Activated naive CD4-positive, alpha-beta T cell treated with anti-CD3 and anti-CD28 coated beads for 36 hours (primary cell): ENCODE measurements at regions of chr10 and their contacts with region 1.

Region 1: DNA sequence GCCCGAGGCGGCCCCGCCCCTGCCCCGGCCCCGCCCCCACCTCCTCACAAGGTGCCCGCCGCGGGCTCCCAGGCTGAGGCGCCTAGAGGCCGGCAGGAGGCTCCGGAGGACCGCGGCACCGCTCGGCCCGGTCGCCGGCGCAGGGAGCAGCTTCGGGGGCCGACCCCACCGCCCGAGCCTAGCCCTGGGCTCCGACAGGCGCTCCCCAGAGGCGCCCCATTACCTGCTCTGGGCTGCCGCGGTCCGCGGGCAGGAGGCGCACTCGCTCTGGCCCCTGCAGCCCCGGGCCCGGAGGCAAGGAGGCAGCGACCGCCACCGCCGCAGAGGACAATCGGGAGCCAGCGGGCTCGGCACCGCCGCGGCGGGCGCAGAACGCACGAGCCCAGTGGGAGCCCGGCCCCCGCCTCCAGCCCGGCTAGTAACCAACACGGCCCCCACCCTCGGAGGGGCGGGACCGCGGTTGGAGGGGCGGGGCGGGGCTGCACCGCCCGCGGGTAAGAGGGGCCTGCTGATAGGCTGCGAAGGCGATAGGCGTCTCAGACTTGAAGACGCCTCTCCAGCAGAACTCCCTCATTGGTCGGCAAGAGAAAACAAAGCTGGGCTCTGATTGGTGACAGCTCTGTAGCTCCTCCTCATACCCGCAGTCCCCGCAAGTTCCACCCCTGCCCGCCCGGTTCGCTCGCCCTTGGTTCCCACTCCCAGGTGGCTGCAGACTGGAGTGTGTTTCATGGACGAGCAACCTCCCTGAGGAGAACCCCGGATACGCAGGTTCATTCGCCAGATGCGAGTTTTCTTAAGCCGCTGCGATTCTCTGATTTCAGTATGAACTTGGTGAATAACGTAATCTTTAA is at the start of gene MPP7:
- DNase-seq: peak; percentile 95
- H3K4me3 Mint-ChIP-seq: peak within 1 kb of the TSS; percentile 82
- H3K27ac Mint-ChIP-seq: peak within 1 kb of the TSS; percentile 77
- H3K4me1 Mint-ChIP-seq: peaks cover 53% of the 10 kb centered on the region
- H3K27me3 Mint-ChIP-seq: no peaks in the 10 kb centered on the region
- total RNA-seq, gene MPP7: 23.6 to 25.4 TPM

Region 2: GRCh38 chr10:27742195-27743011 is 560.5 kb before region 1 on chr10:
- CTCF ChIA-PET with region 1: interaction called, 3 read pairs
- intact Hi-C with region 1: loop called (anchors 1 kb)
- DNase-seq: peak; percentile 88
- H3K4me3 Mint-ChIP-seq: peak overlapping the region; percentile 68
- H3K27ac Mint-ChIP-seq: no peak overlapping the region
- H3K4me1 Mint-ChIP-seq: peaks cover 31% of the 10 kb centered on the region
- H3K27me3 Mint-ChIP-seq: peaks cover 49% of the 10 kb centered on the region

Region 3: DNA sequence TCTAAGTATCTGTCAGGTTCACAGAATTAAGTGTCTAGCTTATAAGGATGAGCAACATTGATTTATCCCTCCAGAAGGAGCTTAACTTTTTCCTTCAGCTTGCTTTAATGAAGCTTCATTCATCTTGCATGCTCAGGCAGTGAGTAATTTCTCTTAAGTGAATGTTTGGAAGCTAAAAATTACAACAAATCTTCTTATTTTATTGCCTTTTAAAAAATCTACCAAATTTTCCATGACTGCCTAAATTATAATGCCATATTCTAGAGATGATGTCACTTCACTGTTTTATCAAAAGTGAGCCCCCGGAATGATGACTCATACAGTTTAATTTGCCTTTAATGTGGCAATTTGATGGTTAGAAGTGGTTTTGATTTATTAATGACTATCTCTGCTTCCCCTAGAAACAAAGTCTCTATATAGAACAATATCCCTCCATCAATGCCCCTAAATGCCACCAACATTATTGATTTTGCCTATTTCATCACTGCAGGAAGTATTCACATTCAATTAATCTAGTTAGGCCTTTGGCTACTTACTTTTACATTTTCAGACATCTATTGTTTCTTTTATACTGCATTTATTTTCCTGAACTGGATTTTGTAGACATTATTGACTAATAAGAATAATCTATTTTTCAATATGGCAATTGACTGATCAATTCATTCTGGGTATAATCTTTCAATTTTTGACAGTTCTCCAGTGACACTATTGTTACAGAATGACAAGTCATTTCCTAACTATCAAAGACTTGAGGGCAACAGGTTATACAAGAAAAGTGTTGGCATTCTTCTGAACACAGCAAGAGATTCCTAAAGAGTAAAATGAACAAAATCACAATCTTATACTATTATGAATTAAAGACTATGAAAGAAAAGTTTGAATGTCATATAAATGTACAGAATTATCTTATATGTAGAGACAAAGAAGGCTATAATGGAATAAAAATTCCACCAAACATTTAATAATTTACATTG is 164.7 kb before region 1 on chr10:
- CTCF ChIA-PET with region 1: no interaction called
- intact Hi-C with region 1: no loop called
- DNase-seq: no peak
- H3K4me3 Mint-ChIP-seq: no peak overlapping the region
- H3K27ac Mint-ChIP-seq: no peak overlapping the region
- H3K4me1 Mint-ChIP-seq: peaks cover 3% of the 10 kb centered on the region
- H3K27me3 Mint-ChIP-seq: no peaks in the 10 kb centered on the region

Region 4: DNA sequence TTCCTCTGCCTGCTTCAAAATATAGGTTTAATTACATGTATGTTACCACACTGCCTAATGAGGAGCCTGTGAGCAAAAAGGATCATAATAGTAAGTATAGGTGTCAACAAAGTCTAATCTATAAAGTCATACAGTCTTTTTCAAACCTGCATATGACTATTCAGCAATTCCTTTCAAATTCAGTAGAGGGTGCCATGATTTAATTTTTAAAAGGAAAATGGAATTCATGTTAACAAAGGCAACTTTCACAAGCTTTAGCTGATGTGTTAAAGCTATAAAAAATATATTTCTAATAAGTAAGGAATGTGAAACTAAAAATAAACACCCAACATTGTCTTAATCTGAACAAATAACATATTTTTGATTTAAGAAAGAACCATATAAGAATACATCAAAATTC is 52.1 kb before region 1 on chr10:
- CTCF ChIA-PET with region 1: interaction called, 44 read pairs
- intact Hi-C with region 1: loop called (anchors 1 kb)
- DNase-seq: no peak
- H3K4me3 Mint-ChIP-seq: no peak overlapping the region
- H3K27ac Mint-ChIP-seq: no peak overlapping the region
- H3K4me1 Mint-ChIP-seq: peaks cover 47% of the 10 kb centered on the region
- H3K27me3 Mint-ChIP-seq: no peaks in the 10 kb centered on the region

Region 5: DNA sequence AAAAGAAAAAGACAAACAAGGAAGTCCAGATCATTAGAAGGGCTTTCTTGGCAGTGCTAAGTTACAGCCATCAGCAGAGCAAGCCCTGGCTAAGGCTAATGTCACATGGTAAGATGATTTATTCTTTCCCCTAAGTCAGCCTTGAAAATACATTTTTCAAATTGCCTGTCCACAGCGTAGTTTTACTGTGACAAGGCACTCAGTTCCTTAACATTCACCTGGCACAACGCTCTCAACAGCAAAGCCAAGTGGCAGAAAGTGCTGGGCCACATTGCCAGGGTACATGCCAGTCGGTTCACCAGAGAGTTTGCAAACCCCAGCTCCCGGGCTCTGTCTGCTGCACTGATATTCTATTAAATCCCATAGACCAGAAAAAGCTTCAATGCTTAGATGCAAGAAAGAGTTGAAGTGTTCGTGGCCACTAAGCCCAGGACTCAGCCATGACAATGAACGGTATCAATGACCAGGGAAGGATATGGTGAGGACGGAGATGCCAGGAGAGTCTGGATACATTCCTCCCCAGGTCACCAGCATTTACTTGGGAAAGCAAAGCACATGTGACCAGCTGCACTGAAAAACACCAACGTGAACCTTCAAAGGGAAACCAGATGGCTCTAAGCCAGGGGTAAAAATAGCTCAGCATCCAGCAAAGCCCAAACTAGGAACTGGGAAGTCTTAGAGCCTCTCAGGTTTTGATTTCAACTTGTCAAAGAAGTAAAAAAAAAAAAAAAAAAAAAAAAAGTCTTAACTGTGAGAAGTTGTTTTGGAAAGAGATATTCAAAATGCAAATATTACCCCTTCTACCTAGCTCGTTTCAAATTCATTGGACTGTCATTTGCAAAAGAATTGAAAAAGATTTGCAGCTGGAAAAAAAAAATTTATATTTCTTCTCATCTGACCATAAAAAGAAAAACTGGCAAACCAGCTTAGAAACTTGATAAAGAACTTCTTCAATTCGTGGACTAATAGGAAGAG is 23.9 kb after region 1 on chr10:
- CTCF ChIA-PET with region 1: interaction called, 27 read pairs
- intact Hi-C with region 1: no loop called
- DNase-seq: no peak
- H3K4me3 Mint-ChIP-seq: peak overlapping the region; percentile 37
- H3K27ac Mint-ChIP-seq: no peak overlapping the region
- H3K4me1 Mint-ChIP-seq: peaks cover 46% of the 10 kb centered on the region
- H3K27me3 Mint-ChIP-seq: no peaks in the 10 kb centered on the region

Region 6: GRCh38 chr10:28393966-28394568 is 91.2 kb after region 1 on chr10:
- CTCF ChIA-PET with region 1: interaction called, 20 read pairs
- intact Hi-C with region 1: no loop called
- DNase-seq: peak; percentile 83
- H3K4me3 Mint-ChIP-seq: no peak overlapping the region
- H3K27ac Mint-ChIP-seq: no peak overlapping the region
- H3K4me1 Mint-ChIP-seq: peaks cover 4% of the 10 kb centered on the region
- H3K27me3 Mint-ChIP-seq: no peaks in the 10 kb centered on the region